ENCODE measurements at regions of chr1 and their contacts with region 1.

Region 1: DNA sequence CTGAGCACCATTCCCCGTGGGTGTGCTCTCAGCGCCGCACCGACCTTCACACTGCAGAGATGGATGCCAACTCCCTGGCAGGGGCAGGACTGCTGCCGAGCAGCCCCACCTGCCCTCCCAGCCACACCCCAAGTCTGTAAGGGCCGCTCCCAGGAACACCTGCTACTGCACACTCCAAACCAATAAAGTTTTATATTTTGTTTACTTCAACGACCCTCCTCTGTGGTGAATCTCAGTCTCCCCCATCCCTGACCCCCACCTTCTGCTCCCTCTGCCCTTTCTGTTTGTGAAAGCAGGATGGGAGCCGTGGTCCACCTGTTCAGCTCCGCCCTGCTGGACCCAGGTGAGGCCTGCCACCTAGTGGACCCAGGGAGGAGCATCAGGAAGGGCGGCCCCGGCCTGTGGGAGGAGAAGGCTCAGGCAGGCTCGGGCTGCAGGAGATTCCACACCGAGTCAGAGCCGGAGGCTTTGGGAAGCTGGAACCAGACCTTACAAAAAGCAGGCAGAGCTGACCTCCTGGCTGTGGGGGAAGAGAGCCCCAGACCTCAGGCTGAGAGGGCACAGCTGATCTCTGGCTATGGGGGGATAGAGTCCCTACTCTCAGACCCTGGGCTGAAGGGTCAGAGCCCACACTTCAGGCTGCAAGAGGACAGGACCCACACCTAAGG is 982 bp upstream of the TMEM82 start:
- DNase-seq: peak; percentile 73
- H3K4me3 ChIP-seq: no peak overlapping the region
- H3K27ac ChIP-seq: no peak overlapping the region
- H3K4me1 ChIP-seq: peaks cover 3% of the 10 kb centered on the region
- H3K27me3 ChIP-seq: no peaks in the 10 kb centered on the region
- CTCF ChIP-seq: peak; percentile 81 to 98

Region 2: GRCh38 chr1:15598436-15598835 is 142.9 kb before region 1 on chr1:
- CTCF ChIA-PET with region 1: interaction called, 7 read pairs
- dilution Hi-C with region 1: no loop called
- in situ Hi-C with region 1: loop called (anchors 5 to 10 kb)
- intact Hi-C with region 1: loop called (anchors 1 kb)
- DNase-seq: no peak
- H3K4me3 ChIP-seq: no peak overlapping the region
- H3K27ac ChIP-seq: no peak overlapping the region
- H3K4me1 ChIP-seq: no peaks in the 10 kb centered on the region
- H3K27me3 ChIP-seq: no peaks in the 10 kb centered on the region
- CTCF ChIP-seq: no peak

Region 3: GRCh38 chr1:15617175-15617880 is 124.0 kb before region 1 on chr1 and contains the start of gene DDI2:
- CTCF ChIA-PET with region 1: no interaction called
- dilution Hi-C with region 1: no loop called
- in situ Hi-C with region 1: no loop called
- intact Hi-C with region 1: no loop called
- DNase-seq: peak; percentile 98
- H3K4me3 ChIP-seq: peak within 1 kb of the TSS; percentile 81 to 99 (median 96)
- H3K27ac ChIP-seq: peak within 1 kb of the TSS; percentile 81
- H3K4me1 ChIP-seq: peaks cover 29% of the 10 kb centered on the region
- H3K27me3 ChIP-seq: no peaks in the 10 kb centered on the region
- CTCF ChIP-seq: no peak
- total RNA-seq, gene DDI2: 22.2 to 29.7 TPM

Region 4: DNA sequence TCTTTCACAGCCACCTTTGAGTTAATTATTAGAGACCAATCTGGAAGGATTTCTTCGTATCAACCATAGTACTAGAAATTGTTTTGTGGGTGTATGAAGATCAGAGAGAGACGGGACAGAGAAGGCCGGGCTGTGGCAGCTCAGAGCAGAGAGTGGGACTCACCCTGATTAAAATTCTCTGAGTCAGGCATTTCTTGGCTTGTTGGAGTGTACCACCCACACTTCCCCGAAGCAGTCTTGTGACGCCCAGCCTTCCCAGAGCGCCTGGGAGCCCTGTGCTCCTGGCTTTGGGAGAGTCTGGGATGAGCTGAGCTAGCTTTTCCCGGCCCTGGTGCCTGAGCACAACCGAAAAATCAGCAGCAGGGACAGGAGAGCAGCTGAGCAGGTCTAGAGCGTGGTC is 37.8 kb before region 1 on chr1:
- CTCF ChIA-PET with region 1: no interaction called
- dilution Hi-C with region 1: no loop called
- in situ Hi-C with region 1: no loop called
- intact Hi-C with region 1: no loop called
- DNase-seq: peak; percentile 79
- H3K4me3 ChIP-seq: peak overlapping the region in 2 of 3 experiments; percentile 11 to 28
- H3K27ac ChIP-seq: peak overlapping the region; percentile 73
- H3K4me1 ChIP-seq: peaks cover 17% of the 10 kb centered on the region
- H3K27me3 ChIP-seq: no peaks in the 10 kb centered on the region
- CTCF ChIP-seq: no peak

Region 5: GRCh38 chr1:15717418-15718125 is 23.7 kb before region 1 on chr1:
- CTCF ChIA-PET with region 1: interaction called, 24 read pairs
- dilution Hi-C with region 1: no loop called
- in situ Hi-C with region 1: no loop called
- intact Hi-C with region 1: no loop called
- DNase-seq: no peak
- H3K4me3 ChIP-seq: no peak overlapping the region
- H3K27ac ChIP-seq: no peak overlapping the region
- H3K4me1 ChIP-seq: no peaks in the 10 kb centered on the region
- H3K27me3 ChIP-seq: no peaks in the 10 kb centered on the region
- CTCF ChIP-seq: no peak

Region 6: GRCh38 chr1:15775706-15776105 is 34.4 kb after region 1 on chr1:
- CTCF ChIA-PET with region 1: no interaction called
- dilution Hi-C with region 1: no loop called
- in situ Hi-C with region 1: no loop called
- intact Hi-C with region 1: no loop called
- DNase-seq: no peak
- H3K4me3 ChIP-seq: no peak overlapping the region
- H3K27ac ChIP-seq: no peak overlapping the region
- H3K4me1 ChIP-seq: no peaks in the 10 kb centered on the region
- H3K27me3 ChIP-seq: no peaks in the 10 kb centered on the region
- CTCF ChIP-seq: no peak

Measured in mammary epithelial cell (primary cell).